Lower lobe of right lung (tissue), 2 donors: ENCODE measurements at regions of chr5 and their contacts with region 1.

Region 1: GRCh38 chr5:19987612-19988503 is at the start of gene CDH18:
- DNase-seq: peak; percentile 45
- ATAC-seq: peak; percentile 68 to 75
- H3K4me3 ChIP-seq: no peak within 1 kb of the TSS
- H3K27ac ChIP-seq: no peak within 1 kb of the TSS
- H3K4me1 ChIP-seq: no peaks in the 10 kb centered on the region
- H3K27me3 ChIP-seq: no peaks in the 10 kb centered on the region
- CTCF ChIP-seq: no peak
- total RNA-seq, gene CDH18: not detected

Region 2: GRCh38 chr5:20055721-20056120 is 67.9 kb after region 1 on chr5:
- intact Hi-C with region 1: loop called (anchors 5 kb)
- DNase-seq: no peak
- ATAC-seq: no peak
- H3K4me3 ChIP-seq: no peak overlapping the region
- H3K27ac ChIP-seq: no peak overlapping the region
- H3K4me1 ChIP-seq: no peaks in the 10 kb centered on the region
- H3K27me3 ChIP-seq: no peaks in the 10 kb centered on the region
- CTCF ChIP-seq: no peak